MCF 10A (cell line): ENCODE measurements at regions of chrX and their contacts with region 1.

Region 1: DNA sequence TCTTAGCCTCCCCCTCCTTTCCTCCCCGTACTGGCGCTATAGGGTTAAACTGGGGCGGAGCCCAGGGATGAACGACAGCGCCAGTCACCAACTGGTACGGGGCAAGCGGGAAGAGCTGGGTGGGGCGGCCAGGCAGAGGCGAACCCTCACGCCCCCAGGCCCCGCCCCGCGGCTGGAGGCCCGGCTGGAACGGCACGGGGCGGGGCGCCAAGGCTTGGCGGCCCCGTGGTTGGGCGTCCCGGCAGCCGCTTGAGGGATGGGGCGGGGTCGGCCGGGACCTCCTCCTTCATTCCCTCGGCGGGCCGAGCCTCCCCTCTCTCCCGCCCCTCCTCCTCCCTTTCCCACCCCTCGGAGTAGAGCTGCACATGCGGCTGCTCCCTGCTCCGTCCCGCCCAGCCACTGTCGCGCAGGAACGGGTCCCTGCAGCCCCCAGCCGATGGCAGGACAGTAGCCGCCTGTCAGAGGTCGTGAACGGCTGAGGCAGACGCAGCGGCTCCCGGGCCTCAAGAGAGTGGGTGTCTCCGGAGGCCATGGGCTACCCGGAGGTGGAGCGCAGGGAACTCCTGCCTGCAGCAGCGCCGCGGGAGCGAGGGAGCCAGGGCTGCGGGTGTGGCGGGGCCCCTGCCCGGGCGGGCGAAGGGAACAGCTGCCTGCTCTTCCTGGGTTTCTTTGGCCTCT is at the start of gene EDA:
- DNase-seq: peak; percentile 86
- H3K4me3 Mint-ChIP-seq: peak within 1 kb of the TSS; percentile 78
- H3K27ac Mint-ChIP-seq: no peak within 1 kb of the TSS
- H3K4me1 Mint-ChIP-seq: peaks cover 5% of the 10 kb centered on the region
- H3K27me3 Mint-ChIP-seq: peaks cover 60% of the 10 kb centered on the region
- CTCF ChIP-seq: no peak
- total RNA-seq, gene EDA: 1.1 and 1.3 TPM in 2 replicates

Region 2: DNA sequence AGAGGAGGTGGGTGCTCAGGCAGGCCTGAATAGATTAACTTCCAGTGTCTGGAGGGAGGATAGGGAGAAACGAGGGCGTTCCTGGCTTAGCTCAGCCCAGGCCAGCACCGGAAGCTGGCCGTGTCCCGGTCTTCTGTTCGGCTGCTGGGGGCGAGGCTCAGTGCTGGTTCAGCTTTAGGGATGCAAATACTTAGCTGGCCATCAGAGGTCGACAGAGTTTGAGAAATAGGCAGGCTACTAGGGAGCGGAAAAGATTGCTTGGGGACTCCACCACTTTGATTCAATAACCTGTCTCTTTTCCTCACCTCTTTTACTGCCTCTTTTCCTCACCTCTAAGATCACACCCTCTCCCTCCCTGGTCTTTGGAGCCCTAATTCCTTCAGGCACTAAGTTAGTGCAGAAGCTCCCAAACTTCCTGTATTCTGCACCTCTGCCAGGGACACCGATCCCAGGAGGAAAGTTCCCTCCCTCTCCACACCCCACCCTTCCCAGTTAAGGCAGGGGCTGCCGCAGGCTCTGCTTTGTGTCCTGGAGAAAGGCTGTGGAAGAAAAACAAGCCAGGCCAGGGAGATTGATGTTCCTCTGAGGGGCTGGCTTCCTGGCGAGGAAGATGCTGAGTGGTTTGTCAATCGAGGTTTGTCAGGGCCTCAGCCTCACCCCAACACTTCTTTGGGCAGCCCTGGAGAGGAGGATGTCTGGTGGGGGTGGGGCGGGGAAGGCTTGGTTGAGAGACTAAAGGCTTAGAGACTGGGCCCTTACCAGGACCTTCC is 793.1 kb before region 1 on chrX:
- CTCF ChIA-PET with region 1: interaction called, 6 read pairs
- POLR2A ChIA-PET with region 1: no interaction called
- intact Hi-C with region 1: loop called (anchors 5 kb)
- DNase-seq: peak; percentile 65
- H3K4me3 Mint-ChIP-seq: no peak overlapping the region
- H3K27ac Mint-ChIP-seq: no peak overlapping the region
- H3K4me1 Mint-ChIP-seq: peaks cover 11% of the 10 kb centered on the region
- H3K27me3 Mint-ChIP-seq: peaks cover 40% of the 10 kb centered on the region
- CTCF ChIP-seq: peak; percentile 76

Region 3: GRCh38 chrX:69374569-69374968 is 241.3 kb before region 1 on chrX:
- CTCF ChIA-PET with region 1: no interaction called
- POLR2A ChIA-PET with region 1: no interaction called
- intact Hi-C with region 1: no loop called
- DNase-seq: no peak
- H3K4me3 Mint-ChIP-seq: no peak overlapping the region
- H3K27ac Mint-ChIP-seq: no peak overlapping the region
- H3K4me1 Mint-ChIP-seq: no peaks in the 10 kb centered on the region
- H3K27me3 Mint-ChIP-seq: peaks cover 69% of the 10 kb centered on the region
- CTCF ChIP-seq: no peak

Region 4: DNA sequence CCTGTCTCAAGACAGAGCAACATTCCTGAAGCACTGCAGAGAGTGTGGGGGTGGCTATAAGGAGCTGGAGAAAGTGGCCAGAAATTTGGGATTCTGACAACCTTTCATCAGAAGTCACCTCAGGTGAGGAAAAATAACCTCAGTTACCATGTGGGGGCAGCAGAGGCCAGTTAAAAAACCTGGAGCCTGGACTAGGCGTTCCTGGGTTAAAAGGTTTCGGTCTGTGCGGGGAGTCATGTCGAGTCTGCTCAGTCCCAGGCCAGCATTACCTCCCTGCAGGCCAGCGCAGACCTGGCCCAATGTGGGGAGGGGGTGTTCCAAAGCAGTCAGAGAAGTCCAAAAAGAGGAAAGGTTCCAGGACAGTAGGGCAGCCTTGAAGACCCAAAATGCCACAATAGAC is 122.7 kb before region 1 on chrX:
- CTCF ChIA-PET with region 1: interaction called, 15 read pairs
- POLR2A ChIA-PET with region 1: no interaction called
- intact Hi-C with region 1: loop called (anchors 2 kb)
- DNase-seq: peak; percentile 71
- H3K4me3 Mint-ChIP-seq: no peak overlapping the region
- H3K27ac Mint-ChIP-seq: no peak overlapping the region
- H3K4me1 Mint-ChIP-seq: peaks cover 7% of the 10 kb centered on the region
- H3K27me3 Mint-ChIP-seq: peaks cover 66% of the 10 kb centered on the region
- CTCF ChIP-seq: peak; percentile 69

Region 5: DNA sequence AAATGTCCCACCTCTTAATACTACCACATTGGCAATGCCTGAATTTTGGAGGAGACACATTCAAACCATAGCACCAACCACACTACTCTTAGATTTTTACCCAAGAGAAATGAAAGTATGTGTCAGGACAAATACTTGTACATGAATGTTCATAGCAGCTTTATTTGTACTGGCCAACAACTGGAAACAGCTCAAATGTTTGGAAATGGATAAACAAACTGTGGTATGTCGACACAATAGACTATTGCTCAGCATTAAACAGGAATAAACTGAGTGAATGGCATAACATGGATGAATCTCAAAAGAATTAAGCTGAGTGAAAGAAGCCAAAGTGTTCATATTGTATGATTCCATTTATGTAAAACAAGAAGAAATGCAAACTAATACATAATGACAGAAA is 18.5 kb before region 1 on chrX:
- CTCF ChIA-PET with region 1: interaction called, 19 read pairs
- POLR2A ChIA-PET with region 1: interaction called, 3 read pairs
- intact Hi-C with region 1: no loop called
- DNase-seq: peak; percentile 35
- H3K4me3 Mint-ChIP-seq: no peak overlapping the region
- H3K27ac Mint-ChIP-seq: no peak overlapping the region
- H3K4me1 Mint-ChIP-seq: no peaks in the 10 kb centered on the region
- H3K27me3 Mint-ChIP-seq: peaks cover 34% of the 10 kb centered on the region
- CTCF ChIP-seq: no peak

Region 6: GRCh38 chrX:69627744-69628143 is 11.8 kb after region 1 on chrX:
- CTCF ChIA-PET with region 1: interaction called, 14 read pairs
- POLR2A ChIA-PET with region 1: interaction called, 4 read pairs
- intact Hi-C with region 1: no loop called
- DNase-seq: no peak
- H3K4me3 Mint-ChIP-seq: no peak overlapping the region
- H3K27ac Mint-ChIP-seq: no peak overlapping the region
- H3K4me1 Mint-ChIP-seq: no peaks in the 10 kb centered on the region
- H3K27me3 Mint-ChIP-seq: peaks cover 40% of the 10 kb centered on the region
- CTCF ChIP-seq: no peak

Region 7: GRCh38 chrX:69896046-69896445 is 280.1 kb after region 1 on chrX:
- CTCF ChIA-PET with region 1: no interaction called
- POLR2A ChIA-PET with region 1: no interaction called
- intact Hi-C with region 1: no loop called
- DNase-seq: no peak
- H3K4me3 Mint-ChIP-seq: no peak overlapping the region
- H3K27ac Mint-ChIP-seq: no peak overlapping the region
- H3K4me1 Mint-ChIP-seq: no peaks in the 10 kb centered on the region
- H3K27me3 Mint-ChIP-seq: peaks cover 33% of the 10 kb centered on the region
- CTCF ChIP-seq: no peak

Region 8: GRCh38 chrX:70168238-70169188 is 552.6 kb after region 1 on chrX:
- CTCF ChIA-PET with region 1: no interaction called
- POLR2A ChIA-PET with region 1: no interaction called
- intact Hi-C with region 1: no loop called
- DNase-seq: peak; percentile 30
- H3K4me3 Mint-ChIP-seq: no peak overlapping the region
- H3K27ac Mint-ChIP-seq: no peak overlapping the region
- H3K4me1 Mint-ChIP-seq: no peaks in the 10 kb centered on the region
- H3K27me3 Mint-ChIP-seq: peaks cover 53% of the 10 kb centered on the region
- CTCF ChIP-seq: no peak

Region 9: DNA sequence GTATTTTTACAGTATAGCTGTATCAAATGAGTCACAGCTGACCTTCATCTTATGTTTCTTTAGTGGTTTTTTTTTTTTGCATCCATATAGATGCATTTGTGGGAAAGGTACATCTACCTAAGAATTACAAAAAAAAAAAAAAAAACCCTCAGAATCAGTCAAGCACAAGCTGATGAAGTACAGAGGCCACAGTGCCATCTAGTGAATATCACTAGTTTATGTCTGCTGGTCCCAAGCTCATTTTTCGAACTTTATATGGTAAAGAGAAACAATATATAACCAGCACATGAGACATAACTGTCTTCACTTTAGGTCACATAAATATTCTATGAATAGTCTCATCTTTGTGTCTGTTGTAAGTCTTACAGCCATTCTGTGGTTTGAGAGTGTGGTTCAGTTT is 1048.8 kb after region 1 on chrX:
- CTCF ChIA-PET with region 1: interaction called, 10 read pairs
- POLR2A ChIA-PET with region 1: no interaction called
- intact Hi-C with region 1: no loop called
- DNase-seq: peak; percentile 50
- H3K4me3 Mint-ChIP-seq: no peak overlapping the region
- H3K27ac Mint-ChIP-seq: no peak overlapping the region
- H3K4me1 Mint-ChIP-seq: no peaks in the 10 kb centered on the region
- H3K27me3 Mint-ChIP-seq: peaks cover 74% of the 10 kb centered on the region
- CTCF ChIP-seq: peak; percentile 50